ENCODE measurements at regions of chr13 and their contacts with region 1.

Region 1: GRCh38 chr13:41668130-41668757 is 210.9 kb downstream of the RGCC start:
- DNase-seq: peak; percentile 37 to 88
- H3K4me3 ChIP-seq: no peak overlapping the region
- H3K27ac ChIP-seq: no peak overlapping the region
- H3K4me1 ChIP-seq: peaks cover 4% of the 10 kb centered on the region; the same call in 1 of the 2 replicates
- H3K27me3 ChIP-seq: no peaks in the 10 kb centered on the region
- CTCF ChIP-seq: peak; percentile 76

Region 2: DNA sequence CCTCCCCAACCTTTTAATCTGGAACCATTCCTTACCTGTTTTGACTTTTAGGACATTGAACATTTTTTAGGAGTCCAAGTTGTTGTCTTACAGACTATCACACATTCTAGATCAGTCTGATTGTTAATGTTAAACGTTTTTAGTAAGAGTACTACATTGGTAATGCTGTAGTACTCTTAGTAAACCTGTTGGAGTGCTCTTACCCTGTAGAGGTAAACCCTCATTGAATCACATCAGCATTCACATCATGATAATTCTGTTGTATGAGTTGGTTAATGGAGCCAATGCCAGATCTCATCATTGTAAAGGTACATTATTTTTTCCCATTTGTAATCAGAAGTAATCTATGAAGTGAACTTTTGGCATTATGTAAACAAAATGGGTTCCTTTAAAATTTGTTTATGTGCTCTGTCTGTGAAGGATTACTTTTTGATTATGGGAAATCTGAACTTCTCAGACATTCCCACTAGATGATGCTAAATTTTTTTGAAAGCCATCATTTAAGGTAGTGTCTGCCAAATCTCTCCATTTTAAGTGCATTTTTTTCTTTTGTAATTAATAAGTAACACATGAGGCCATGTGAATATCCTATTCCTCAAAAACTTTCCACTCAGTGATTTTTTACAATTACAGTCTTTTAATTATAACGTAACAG is 237.5 kb after region 1 on chr13:
- CTCF ChIA-PET with region 1: no interaction called
- POLR2A ChIA-PET with region 1: no interaction called
- intact Hi-C with region 1: loop called (anchors 2 kb)
- DNase-seq: no peak
- H3K4me3 ChIP-seq: no peak overlapping the region
- H3K27ac ChIP-seq: no peak overlapping the region
- H3K4me1 ChIP-seq: no peaks in the 10 kb centered on the region
- H3K27me3 ChIP-seq: no peaks in the 10 kb centered on the region
- CTCF ChIP-seq: peak; percentile 63

Region 3: GRCh38 chr13:42215578-42216421 is 547.6 kb after region 1 on chr13:
- CTCF ChIA-PET with region 1: no interaction called
- POLR2A ChIA-PET with region 1: no interaction called
- intact Hi-C with region 1: loop called (anchors 5 kb)
- DNase-seq: peak in 1 of 2 experiments; percentile 24
- H3K4me3 ChIP-seq: no peak overlapping the region
- H3K27ac ChIP-seq: no peak overlapping the region
- H3K4me1 ChIP-seq: no peaks in the 10 kb centered on the region
- H3K27me3 ChIP-seq: no peaks in the 10 kb centered on the region
- CTCF ChIP-seq: peak; percentile 64